ENCODE measurements at regions of chr15 and their contacts with region 1.

Region 1: GRCh38 chr15:31488426-31489204 is 162.0 kb downstream of the KLF13 start:
- DNase-seq: peak; percentile 82 to 92
- H3K4me3 ChIP-seq: no peak overlapping the region
- H3K27ac ChIP-seq: peak overlapping the region; percentile 55 to 78 (median 70)
- H3K4me1 ChIP-seq: peaks cover 25 to 38% (median 28%) of the 10 kb centered on the region in 4 donors
- H3K27me3 ChIP-seq: peaks cover 0 to 12% (median 6%) of the 10 kb centered on the region in 3 donors
- CTCF ChIP-seq: peak in 6 of 7 experiments; percentile 85 to 99 (median 90)
- EP300 ChIP-seq: no peak
- POLR2A ChIP-seq: no peak

Region 2: GRCh38 chr15:31200735-31201151 is 287.9 kb before region 1 on chr15:
- intact Hi-C with region 1: loop called (anchors 5 kb)
- DNase-seq: peak; percentile 85 to 90
- H3K4me3 ChIP-seq: no peak overlapping the region
- H3K27ac ChIP-seq: no peak overlapping the region
- H3K4me1 ChIP-seq: peaks cover 0 to 9% (median 0%) of the 10 kb centered on the region in 4 donors
- H3K27me3 ChIP-seq: peaks cover 0 to 5% (median 0%) of the 10 kb centered on the region in 3 donors
- CTCF ChIP-seq: peak in 4 of 7 experiments; percentile 29 to 74 (median 58)
- EP300 ChIP-seq: no peak
- POLR2A ChIP-seq: no peak

Region 3: GRCh38 chr15:31215490-31216214 is 273.0 kb before region 1 on chr15:
- intact Hi-C with region 1: loop called (anchors 5 kb)
- DNase-seq: peak; percentile 90 to 93
- H3K4me3 ChIP-seq: peak overlapping the region; percentile 50 to 62 (median 56)
- H3K27ac ChIP-seq: peak overlapping the region; percentile 91 to 99 (median 98)
- H3K4me1 ChIP-seq: peaks cover 12 to 56% (median 29%) of the 10 kb centered on the region in 4 donors
- H3K27me3 ChIP-seq: no peaks in the 10 kb centered on the region
- CTCF ChIP-seq: peak in 5 of 7 experiments; percentile 89 to 94 (median 92)
- EP300 ChIP-seq: no peak
- POLR2A ChIP-seq: no peak

Region 4: DNA sequence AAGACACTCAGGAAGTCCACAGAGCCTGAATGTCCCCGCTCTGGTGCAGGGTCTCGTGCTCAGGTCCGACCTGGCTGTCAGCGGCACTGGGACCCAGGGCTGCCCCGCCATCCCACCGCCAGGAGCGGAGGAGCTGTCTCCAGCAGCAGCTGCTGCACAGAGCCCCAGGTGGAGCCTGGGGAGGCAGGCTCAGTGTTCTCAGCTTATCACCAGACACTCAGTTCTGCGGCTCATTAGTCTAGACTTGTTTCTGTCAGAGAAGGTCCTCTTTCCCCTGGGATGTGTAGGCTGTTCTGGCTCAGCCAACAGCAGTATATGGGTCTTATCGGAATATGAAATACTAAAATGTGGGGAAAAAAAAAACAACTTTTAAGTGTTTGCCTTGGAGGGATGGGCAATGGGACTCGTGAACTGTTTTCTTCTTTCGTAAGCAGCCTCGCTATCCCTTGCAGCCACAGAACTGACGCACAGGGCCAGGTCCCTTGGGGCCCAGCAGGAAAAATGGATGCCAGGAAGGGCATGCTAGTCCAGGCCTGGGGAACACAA is 86.0 kb before region 1 on chr15:
- intact Hi-C with region 1: loop called (anchors 10 kb)
- DNase-seq: peak in 1 of 2 donors; percentile 52
- H3K4me3 ChIP-seq: no peak overlapping the region
- H3K27ac ChIP-seq: peak overlapping the region in 3 of 5 donors; percentile 13 to 42 (median 41)
- H3K4me1 ChIP-seq: peaks cover 13 to 36% (median 18%) of the 10 kb centered on the region in 4 donors
- H3K27me3 ChIP-seq: no peaks in the 10 kb centered on the region
- CTCF ChIP-seq: no peak
- EP300 ChIP-seq: no peak
- POLR2A ChIP-seq: no peak